Activated CD8-positive, alpha-beta T cell treated with anti-CD3 and anti-CD28 coated beads for 36 hours (primary cell): ENCODE measurements at regions of chr14 and their contacts with region 1.

Region 1: DNA sequence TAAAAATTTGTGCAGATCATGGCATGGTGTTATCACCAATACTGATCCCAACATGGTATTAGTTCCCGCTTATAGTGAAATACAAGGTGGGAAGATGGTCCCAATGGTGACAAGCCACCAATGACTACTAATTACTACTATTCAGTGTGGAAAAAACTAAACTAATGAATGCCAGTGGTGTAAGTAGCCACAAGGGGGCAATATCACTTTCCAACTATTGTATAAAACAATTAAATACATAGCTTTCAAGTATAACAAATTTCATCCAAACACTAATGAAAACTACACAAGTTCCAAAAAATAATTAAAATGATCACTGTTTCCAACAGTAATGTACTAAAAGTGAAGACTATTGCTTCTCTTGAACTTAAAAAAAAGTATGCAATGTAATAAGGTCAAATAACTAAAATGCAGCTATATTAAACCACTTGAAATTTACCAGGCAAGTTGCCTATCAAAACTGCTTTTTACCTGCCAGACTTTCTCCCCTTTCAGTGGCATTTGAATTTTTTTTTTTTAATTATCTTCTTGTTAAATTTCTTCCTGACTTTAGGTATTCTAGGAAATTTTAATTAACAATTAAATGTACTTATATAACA is 58.0 kb downstream of the PAPLN start:
- DNase-seq: peak; percentile 16
- ATAC-seq: no peak
- H3K4me3 Mint-ChIP-seq: no peak overlapping the region
- H3K27ac Mint-ChIP-seq: no peak overlapping the region
- H3K4me1 Mint-ChIP-seq: peaks cover 16% of the 10 kb centered on the region
- H3K27me3 Mint-ChIP-seq: no peaks in the 10 kb centered on the region
- CTCF ChIP-seq: peak; percentile 79

Region 2: GRCh38 chr14:72855913-72856312 is 439.4 kb before region 1 on chr14:
- CTCF ChIA-PET with region 1: no interaction called
- POLR2A ChIA-PET with region 1: no interaction called
- intact Hi-C with region 1: no loop called
- DNase-seq: no peak
- ATAC-seq: no peak
- H3K4me3 Mint-ChIP-seq: no peak overlapping the region
- H3K27ac Mint-ChIP-seq: no peak overlapping the region
- H3K4me1 Mint-ChIP-seq: peaks cover 7% of the 10 kb centered on the region
- H3K27me3 Mint-ChIP-seq: no peaks in the 10 kb centered on the region
- CTCF ChIP-seq: no peak

Region 3: GRCh38 chr14:73307261-73307660 is 12.0 kb after region 1 on chr14:
- CTCF ChIA-PET with region 1: interaction called, 43 read pairs
- POLR2A ChIA-PET with region 1: no interaction called
- intact Hi-C with region 1: no loop called
- DNase-seq: no peak
- ATAC-seq: no peak
- H3K4me3 Mint-ChIP-seq: no peak overlapping the region
- H3K27ac Mint-ChIP-seq: no peak overlapping the region
- H3K4me1 Mint-ChIP-seq: peaks cover 12% of the 10 kb centered on the region
- H3K27me3 Mint-ChIP-seq: no peaks in the 10 kb centered on the region
- CTCF ChIP-seq: no peak

Region 4: DNA sequence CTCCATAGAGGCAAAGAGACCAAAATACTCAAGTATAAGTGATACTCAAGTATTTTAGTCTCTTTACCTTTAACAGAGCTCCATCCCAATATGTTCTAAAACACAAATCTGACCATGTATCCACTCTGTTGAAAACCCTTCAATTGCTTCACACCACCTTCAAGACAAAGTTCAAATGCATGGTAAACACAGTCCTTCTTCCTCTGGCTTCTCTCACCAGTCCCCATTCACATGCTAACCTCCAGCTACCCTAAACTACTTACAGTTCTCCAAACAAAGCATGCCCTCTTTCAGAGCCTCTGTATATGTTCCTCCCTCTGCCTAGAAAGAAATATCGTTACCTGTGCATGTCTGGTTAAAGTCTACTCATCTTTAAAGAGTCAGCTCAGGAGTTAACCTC is 62.9 kb after region 1 on chr14:
- CTCF ChIA-PET with region 1: no interaction called
- POLR2A ChIA-PET with region 1: no interaction called
- intact Hi-C with region 1: no loop called
- DNase-seq: no peak
- ATAC-seq: no peak
- H3K4me3 Mint-ChIP-seq: no peak overlapping the region
- H3K27ac Mint-ChIP-seq: no peak overlapping the region
- H3K4me1 Mint-ChIP-seq: no peaks in the 10 kb centered on the region
- H3K27me3 Mint-ChIP-seq: no peaks in the 10 kb centered on the region
- CTCF ChIP-seq: no peak

Region 5: GRCh38 chr14:73458151-73458976 is 163.1 kb after region 1 on chr14 and contains the start of gene NUMB:
- CTCF ChIA-PET with region 1: interaction called, 21 read pairs
- POLR2A ChIA-PET with region 1: no interaction called
- intact Hi-C with region 1: no loop called
- DNase-seq: peak; percentile 99
- ATAC-seq: peak; percentile 97
- H3K4me3 Mint-ChIP-seq: peak within 1 kb of the TSS; percentile 89
- H3K27ac Mint-ChIP-seq: peak within 1 kb of the TSS; percentile 91
- H3K4me1 Mint-ChIP-seq: peaks cover 37% of the 10 kb centered on the region
- H3K27me3 Mint-ChIP-seq: no peaks in the 10 kb centered on the region
- CTCF ChIP-seq: no peak
- total RNA-seq, gene NUMB: 31.8 to 33.0 TPM

Region 6: DNA sequence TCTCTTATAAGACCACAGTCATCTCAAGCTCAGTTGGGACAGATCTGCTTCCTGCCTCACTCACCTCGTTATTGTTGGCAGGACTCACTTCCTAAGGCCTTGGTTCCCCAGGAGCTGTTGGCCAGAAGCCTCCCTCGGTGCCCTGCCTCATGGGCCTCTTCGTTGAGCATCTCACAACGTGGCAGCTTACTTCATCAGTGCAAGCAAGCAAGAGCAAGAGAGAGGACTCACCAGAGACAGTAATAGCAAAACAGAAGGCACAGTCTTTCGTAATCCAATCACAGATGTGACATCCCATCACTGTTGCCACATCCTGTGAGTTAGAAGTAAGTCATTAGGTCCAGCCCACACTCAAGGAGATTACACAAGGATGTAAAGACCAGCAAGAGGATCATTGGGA is 168.1 kb after region 1 on chr14:
- CTCF ChIA-PET with region 1: interaction called, 92 read pairs
- POLR2A ChIA-PET with region 1: interaction called, 3 read pairs
- intact Hi-C with region 1: loop called (anchors 5 kb)
- DNase-seq: peak; percentile 66
- ATAC-seq: peak; percentile 46
- H3K4me3 Mint-ChIP-seq: peak overlapping the region; percentile 35
- H3K27ac Mint-ChIP-seq: peak overlapping the region; percentile 87
- H3K4me1 Mint-ChIP-seq: peaks cover 60% of the 10 kb centered on the region
- H3K27me3 Mint-ChIP-seq: no peaks in the 10 kb centered on the region
- CTCF ChIP-seq: no peak

Region 7: GRCh38 chr14:73472185-73473114 is 177.2 kb after region 1 on chr14:
- CTCF ChIA-PET with region 1: interaction called, 92 read pairs
- POLR2A ChIA-PET with region 1: interaction called, 5 read pairs
- intact Hi-C with region 1: loop called (anchors 5 kb)
- DNase-seq: no peak
- ATAC-seq: peak; percentile 17
- H3K4me3 Mint-ChIP-seq: no peak overlapping the region
- H3K27ac Mint-ChIP-seq: no peak overlapping the region
- H3K4me1 Mint-ChIP-seq: peaks cover 17% of the 10 kb centered on the region
- H3K27me3 Mint-ChIP-seq: no peaks in the 10 kb centered on the region
- CTCF ChIP-seq: peak; percentile 78